B cell (primary cell): ENCODE measurements at regions of chr10 and their contacts with region 1.

Region 1: GRCh38 chr10:74176380-74177139 is 25.5 kb downstream of the ADK start:
- DNase-seq: peak; percentile 98
- ATAC-seq: peak; percentile 90
- H3K4me3 ChIP-seq: peak overlapping the region; percentile 85 to 96 (median 95)
- H3K4me3 Mint-ChIP-seq: peak overlapping the region; percentile 97
- H3K27ac ChIP-seq: peak overlapping the region; percentile 92 to 95
- H3K27ac Mint-ChIP-seq: peak overlapping the region; percentile 98
- H3K4me1 ChIP-seq: peaks cover 39 to 56% of the 10 kb centered on the region in 2 donors
- H3K4me1 Mint-ChIP-seq: peaks cover 55% of the 10 kb centered on the region
- H3K27me3 ChIP-seq: no peaks in the 10 kb centered on the region
- H3K27me3 Mint-ChIP-seq: no peaks in the 10 kb centered on the region
- CTCF ChIP-seq: no peak

Region 2: GRCh38 chr10:73759512-73760115 is 416.9 kb before region 1 on chr10:
- CTCF ChIA-PET with region 1: no interaction called
- POLR2A ChIA-PET with region 1: interaction called, 14 read pairs
- intact Hi-C with region 1: no loop called
- DNase-seq: no peak
- ATAC-seq: peak; percentile 31
- H3K4me3 ChIP-seq: no peak overlapping the region
- H3K4me3 Mint-ChIP-seq: no peak overlapping the region
- H3K27ac ChIP-seq: no peak overlapping the region
- H3K27ac Mint-ChIP-seq: peak overlapping the region; percentile 32
- H3K4me1 ChIP-seq: peaks cover 0 to 6% of the 10 kb centered on the region in 2 donors
- H3K4me1 Mint-ChIP-seq: peaks cover 11% of the 10 kb centered on the region
- H3K27me3 ChIP-seq: no peaks in the 10 kb centered on the region
- H3K27me3 Mint-ChIP-seq: no peaks in the 10 kb centered on the region
- CTCF ChIP-seq: no peak

Region 3: GRCh38 chr10:74058658-74059057 is 117.9 kb before region 1 on chr10:
- CTCF ChIA-PET with region 1: no interaction called
- POLR2A ChIA-PET with region 1: no interaction called
- intact Hi-C with region 1: no loop called
- DNase-seq: peak; percentile 71
- ATAC-seq: peak; percentile 79
- H3K4me3 ChIP-seq: no peak overlapping the region
- H3K4me3 Mint-ChIP-seq: no peak overlapping the region
- H3K27ac ChIP-seq: no peak overlapping the region
- H3K27ac Mint-ChIP-seq: peak overlapping the region; percentile 8
- H3K4me1 ChIP-seq: peaks cover 12 to 13% of the 10 kb centered on the region in 2 donors
- H3K4me1 Mint-ChIP-seq: peaks cover 24% of the 10 kb centered on the region
- H3K27me3 ChIP-seq: no peaks in the 10 kb centered on the region
- H3K27me3 Mint-ChIP-seq: no peaks in the 10 kb centered on the region
- CTCF ChIP-seq: peak; percentile 34

Region 4: GRCh38 chr10:74189999-74190421 is 13.4 kb after region 1 on chr10:
- CTCF ChIA-PET with region 1: interaction called, 5 read pairs
- POLR2A ChIA-PET with region 1: interaction called, 8 read pairs
- intact Hi-C with region 1: loop called (anchors 1 kb)
- DNase-seq: peak; percentile 69
- ATAC-seq: peak; percentile 96
- H3K4me3 ChIP-seq: peak overlapping the region in 3 of 5 experiments; percentile 9 to 25 (median 15)
- H3K4me3 Mint-ChIP-seq: peak overlapping the region; percentile 77
- H3K27ac ChIP-seq: peak overlapping the region; percentile 68 to 80
- H3K27ac Mint-ChIP-seq: peak overlapping the region; percentile 95
- H3K4me1 ChIP-seq: peaks cover 30 to 57% of the 10 kb centered on the region in 2 donors
- H3K4me1 Mint-ChIP-seq: peaks cover 74% of the 10 kb centered on the region
- H3K27me3 ChIP-seq: no peaks in the 10 kb centered on the region
- H3K27me3 Mint-ChIP-seq: no peaks in the 10 kb centered on the region
- CTCF ChIP-seq: no peak

Region 5: GRCh38 chr10:74202356-74202755 is 25.8 kb after region 1 on chr10:
- CTCF ChIA-PET with region 1: no interaction called
- POLR2A ChIA-PET with region 1: no interaction called
- intact Hi-C with region 1: no loop called
- DNase-seq: no peak
- ATAC-seq: no peak
- H3K4me3 ChIP-seq: no peak overlapping the region
- H3K4me3 Mint-ChIP-seq: no peak overlapping the region
- H3K27ac ChIP-seq: no peak overlapping the region
- H3K27ac Mint-ChIP-seq: no peak overlapping the region
- H3K4me1 ChIP-seq: peaks cover 1 to 2% of the 10 kb centered on the region in 2 donors
- H3K4me1 Mint-ChIP-seq: peaks cover 26% of the 10 kb centered on the region
- H3K27me3 ChIP-seq: no peaks in the 10 kb centered on the region
- H3K27me3 Mint-ChIP-seq: no peaks in the 10 kb centered on the region
- CTCF ChIP-seq: no peak

Region 6: GRCh38 chr10:74227697-74228424 is 51.3 kb after region 1 on chr10:
- CTCF ChIA-PET with region 1: interaction called, 3 read pairs
- POLR2A ChIA-PET with region 1: interaction called, 4 read pairs
- intact Hi-C with region 1: loop called (anchors 5 kb)
- DNase-seq: peak; percentile 52
- ATAC-seq: peak; percentile 66
- H3K4me3 ChIP-seq: peak overlapping the region in 2 of 5 experiments; percentile 14 to 15
- H3K4me3 Mint-ChIP-seq: peak overlapping the region; percentile 72
- H3K27ac ChIP-seq: peak overlapping the region; percentile 45 to 72
- H3K27ac Mint-ChIP-seq: peak overlapping the region; percentile 89
- H3K4me1 ChIP-seq: peaks cover 9 to 14% of the 10 kb centered on the region in 2 donors
- H3K4me1 Mint-ChIP-seq: peaks cover 16% of the 10 kb centered on the region
- H3K27me3 ChIP-seq: no peaks in the 10 kb centered on the region
- H3K27me3 Mint-ChIP-seq: no peaks in the 10 kb centered on the region
- CTCF ChIP-seq: no peak

Region 7: GRCh38 chr10:74628136-74628535 is 451.6 kb after region 1 on chr10:
- CTCF ChIA-PET with region 1: no interaction called
- POLR2A ChIA-PET with region 1: no interaction called
- intact Hi-C with region 1: no loop called
- DNase-seq: no peak
- ATAC-seq: no peak
- H3K4me3 ChIP-seq: no peak overlapping the region
- H3K4me3 Mint-ChIP-seq: no peak overlapping the region
- H3K27ac ChIP-seq: no peak overlapping the region
- H3K27ac Mint-ChIP-seq: no peak overlapping the region
- H3K4me1 ChIP-seq: no peaks in the 10 kb centered on the region
- H3K4me1 Mint-ChIP-seq: no peaks in the 10 kb centered on the region
- H3K27me3 ChIP-seq: no peaks in the 10 kb centered on the region
- H3K27me3 Mint-ChIP-seq: no peaks in the 10 kb centered on the region
- CTCF ChIP-seq: no peak

Region 8: DNA sequence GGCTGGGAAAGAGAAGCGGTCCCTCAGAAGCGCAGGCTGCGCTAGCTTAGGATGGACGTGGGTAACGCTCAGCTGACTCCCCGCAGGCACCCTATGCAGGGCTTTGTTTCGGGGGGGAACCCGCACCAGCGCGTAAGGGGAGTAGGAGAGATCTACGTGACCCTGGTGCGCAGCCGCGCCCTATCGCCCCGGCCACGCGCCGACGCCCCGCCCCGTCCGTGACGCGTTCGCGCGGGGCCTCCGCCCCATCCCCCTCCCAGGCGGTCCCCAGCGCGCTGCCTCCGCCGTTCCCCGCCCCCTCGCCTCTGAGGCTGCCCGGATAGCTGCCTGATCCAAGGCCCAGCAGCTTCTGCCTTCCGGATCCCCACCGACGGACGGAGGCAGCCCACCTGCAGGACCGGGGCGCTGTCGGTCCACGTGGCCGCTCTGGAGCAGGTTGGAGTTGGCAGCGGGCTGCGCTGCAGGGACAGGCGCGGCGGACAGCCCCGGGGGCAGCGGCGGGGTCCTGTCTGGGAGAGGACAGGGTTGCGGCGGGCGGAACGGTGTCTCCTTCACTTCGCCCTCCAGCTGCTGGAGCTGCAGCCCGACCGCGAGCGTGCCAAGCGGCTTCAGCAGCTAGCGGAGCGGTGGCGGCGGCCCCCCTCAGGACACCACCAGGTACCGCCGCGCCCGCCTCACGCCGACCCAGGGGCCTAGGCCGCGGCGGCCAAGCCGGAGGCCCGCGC is 1033.9 kb after region 1 on chr10 and contains the start of gene VDAC2:
- CTCF ChIA-PET with region 1: no interaction called
- POLR2A ChIA-PET with region 1: no interaction called
- intact Hi-C with region 1: loop called (anchors 1 kb)
- DNase-seq: peak; percentile 99
- ATAC-seq: peak; percentile 89
- H3K4me3 ChIP-seq: peak within 1 kb of the TSS; percentile 84 to 98 (median 93)
- H3K4me3 Mint-ChIP-seq: peak within 1 kb of the TSS; percentile 95
- H3K27ac ChIP-seq: peak within 1 kb of the TSS; percentile 97 to 100
- H3K27ac Mint-ChIP-seq: peak within 1 kb of the TSS; percentile 98
- H3K4me1 ChIP-seq: peaks cover 12 to 20% of the 10 kb centered on the region in 2 donors
- H3K4me1 Mint-ChIP-seq: peaks cover 24% of the 10 kb centered on the region
- H3K27me3 ChIP-seq: no peaks in the 10 kb centered on the region
- H3K27me3 Mint-ChIP-seq: no peaks in the 10 kb centered on the region
- CTCF ChIP-seq: no peak
- total RNA-seq, gene VDAC2: 83.6 and 86.4 TPM in 2 replicates